ENCODE measurements at regions of chr9 and their contacts with region 1.

Region 1: GRCh38 chr9:133144137-133144903 is 19.4 kb downstream of the GBGT1 start:
- DNase-seq: peak; percentile 72
- ATAC-seq: peak; percentile 81
- H3K4me3 ChIP-seq: peak overlapping the region; percentile 60; the same call in 1 of the 2 replicates
- H3K27ac ChIP-seq: peak overlapping the region; percentile 13; the same call in 1 of the 2 replicates
- H3K4me1 ChIP-seq: peaks cover 48% of the 10 kb centered on the region
- H3K27me3 ChIP-seq: no peaks in the 10 kb centered on the region
- CTCF ChIP-seq: peak; percentile 95 to 99 (median 98); a peak in 5 of 6 replicates
- EP300 ChIP-seq: no peak; a peak in 1 of 4 replicates
- POLR2A ChIP-seq: no peak
- RAD21 ChIP-seq: peak; percentile 75

Region 2: DNA sequence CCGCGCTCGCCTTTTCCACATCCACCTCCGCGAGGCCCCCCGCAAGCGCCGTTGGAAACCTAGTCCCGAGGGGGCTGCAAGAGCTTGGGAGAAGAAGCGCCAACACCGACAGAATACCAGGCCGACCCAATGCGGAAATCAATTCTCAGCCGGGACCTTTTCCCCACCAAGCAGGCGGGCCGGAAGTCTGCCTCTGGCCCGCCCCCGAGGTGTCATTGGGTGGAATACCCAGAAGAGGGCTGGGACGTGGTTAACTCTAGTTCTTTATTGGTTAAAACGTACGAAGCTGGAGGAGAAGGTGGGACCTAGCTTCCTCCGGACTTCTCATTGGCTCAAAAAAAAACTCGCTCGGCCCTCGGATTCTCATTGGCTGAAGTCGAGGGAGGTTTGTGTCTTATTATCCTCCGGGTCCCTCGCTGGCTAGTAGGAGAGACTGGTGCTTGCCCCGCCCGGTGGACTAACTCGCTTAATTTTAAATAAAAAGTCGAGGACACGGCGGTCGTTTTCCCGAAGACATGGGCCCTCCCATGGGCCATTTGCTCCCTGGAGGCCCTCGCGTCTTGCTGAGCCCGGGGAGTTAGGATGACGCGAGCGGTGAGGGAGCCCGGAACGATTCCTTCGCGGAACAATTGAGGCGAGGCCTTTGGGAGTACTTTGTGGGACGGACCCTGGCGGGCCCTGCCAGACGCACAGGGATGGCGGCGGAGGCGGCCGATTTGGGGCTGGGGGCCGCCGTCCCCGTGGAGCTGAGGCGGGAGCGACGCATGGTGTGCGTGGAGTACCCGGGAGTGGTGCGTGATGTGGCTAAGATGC is 113.8 kb before region 1 on chr9 and contains the start of gene GTF3C5:
- CTCF ChIA-PET with region 1: interaction called, 27 read pairs
- POLR2A ChIA-PET with region 1: interaction called, 4 read pairs
- RAD21 ChIA-PET with region 1: interaction called, 18 read pairs
- SMC1A ChIA-PET with region 1: interaction called, 5 read pairs
- in situ Hi-C with region 1: no loop called
- intact Hi-C with region 1: no loop called
- DNase-seq: peak; percentile 97
- ATAC-seq: peak; percentile 99
- H3K4me3 ChIP-seq: peak within 1 kb of the TSS; percentile 77
- H3K27ac ChIP-seq: peak within 1 kb of the TSS; percentile 91
- H3K4me1 ChIP-seq: peaks cover 13% of the 10 kb centered on the region
- H3K27me3 ChIP-seq: no peaks in the 10 kb centered on the region
- CTCF ChIP-seq: no peak
- EP300 ChIP-seq: peak in 1 of 2 experiments; percentile 35; a peak in 1 of 4 replicates
- POLR2A ChIP-seq: peak; percentile 95
- RAD21 ChIP-seq: no peak
- polyA plus RNA-seq, gene GTF3C5: 2.2 to 6.9 TPM

Region 3: DNA sequence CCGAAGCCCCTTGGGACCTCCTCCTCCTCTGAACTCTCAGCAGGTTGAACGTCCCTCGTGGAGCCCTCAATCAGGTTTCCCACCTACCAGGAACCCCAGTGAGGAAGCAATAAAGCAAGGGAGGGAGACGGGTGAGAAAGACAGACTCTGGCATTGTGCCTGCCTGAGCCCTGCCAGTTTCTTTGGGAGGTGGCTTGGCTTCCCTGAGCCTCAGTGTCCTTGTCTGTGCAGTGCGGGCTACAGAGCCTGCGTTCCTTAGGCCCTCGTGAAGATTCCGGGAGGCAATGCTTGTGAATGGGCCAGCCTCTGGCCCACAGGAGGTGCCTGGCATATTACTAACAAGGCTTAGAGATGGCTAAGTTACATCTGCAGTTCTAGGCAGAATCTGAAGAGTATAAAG is 101.6 kb before region 1 on chr9:
- CTCF ChIA-PET with region 1: interaction called, 19 read pairs
- POLR2A ChIA-PET with region 1: no interaction called
- RAD21 ChIA-PET with region 1: interaction called, 6 read pairs
- SMC1A ChIA-PET with region 1: interaction called, 4 read pairs
- in situ Hi-C with region 1: no loop called
- intact Hi-C with region 1: loop called (anchors 1 kb)
- DNase-seq: no peak
- ATAC-seq: no peak
- H3K4me3 ChIP-seq: no peak overlapping the region
- H3K27ac ChIP-seq: no peak overlapping the region
- H3K4me1 ChIP-seq: no peaks in the 10 kb centered on the region
- H3K27me3 ChIP-seq: no peaks in the 10 kb centered on the region
- CTCF ChIP-seq: no peak
- EP300 ChIP-seq: no peak
- POLR2A ChIP-seq: no peak
- RAD21 ChIP-seq: no peak

Region 4: GRCh38 chr9:133103183-133103986 is 40.9 kb before region 1 on chr9:
- CTCF ChIA-PET with region 1: interaction called, 401 read pairs
- POLR2A ChIA-PET with region 1: interaction called, 10 read pairs
- RAD21 ChIA-PET with region 1: interaction called, 25 read pairs
- SMC1A ChIA-PET with region 1: interaction called, 16 read pairs
- in situ Hi-C with region 1: loop called (anchors 5 kb)
- intact Hi-C with region 1: loop called (anchors 1 kb)
- DNase-seq: no peak
- ATAC-seq: peak; percentile 88
- H3K4me3 ChIP-seq: no peak overlapping the region
- H3K27ac ChIP-seq: no peak overlapping the region
- H3K4me1 ChIP-seq: no peaks in the 10 kb centered on the region
- H3K27me3 ChIP-seq: no peaks in the 10 kb centered on the region
- CTCF ChIP-seq: peak; percentile 94 to 96 (median 95)
- EP300 ChIP-seq: no peak
- POLR2A ChIP-seq: no peak; the same call in 1 of the 2 replicates
- RAD21 ChIP-seq: peak; percentile 95

Region 5: GRCh38 chr9:133115448-133116345 is 28.6 kb before region 1 on chr9:
- CTCF ChIA-PET with region 1: interaction called, 401 read pairs
- POLR2A ChIA-PET with region 1: interaction called, 66 read pairs
- RAD21 ChIA-PET with region 1: interaction called, 219 read pairs
- SMC1A ChIA-PET with region 1: interaction called, 44 read pairs
- in situ Hi-C with region 1: no loop called
- intact Hi-C with region 1: loop called (anchors 2 kb)
- DNase-seq: peak; percentile 79
- ATAC-seq: peak; percentile 88
- H3K4me3 ChIP-seq: peak overlapping the region; percentile 63; the same call in 1 of the 2 replicates
- H3K27ac ChIP-seq: peak overlapping the region; percentile 88
- H3K4me1 ChIP-seq: peaks cover 67% of the 10 kb centered on the region
- H3K27me3 ChIP-seq: no peaks in the 10 kb centered on the region
- CTCF ChIP-seq: no peak
- EP300 ChIP-seq: peak in 1 of 2 experiments; percentile 2; a peak in 1 of 4 replicates
- POLR2A ChIP-seq: no peak
- RAD21 ChIP-seq: no peak

Region 6: GRCh38 chr9:133121198-133121939 is 23.0 kb before region 1 on chr9 and contains the start of gene RALGDS:
- CTCF ChIA-PET with region 1: interaction called, 401 read pairs
- POLR2A ChIA-PET with region 1: interaction called, 66 read pairs
- RAD21 ChIA-PET with region 1: interaction called, 219 read pairs
- SMC1A ChIA-PET with region 1: interaction called, 44 read pairs
- in situ Hi-C with region 1: no loop called
- intact Hi-C with region 1: loop called (anchors 1 kb)
- DNase-seq: no peak
- ATAC-seq: peak; percentile 68
- H3K4me3 ChIP-seq: peak within 1 kb of the TSS; percentile 91
- H3K27ac ChIP-seq: peak within 1 kb of the TSS; percentile 81
- H3K4me1 ChIP-seq: peaks cover 53% of the 10 kb centered on the region
- H3K27me3 ChIP-seq: no peaks in the 10 kb centered on the region
- CTCF ChIP-seq: no peak
- EP300 ChIP-seq: no peak
- POLR2A ChIP-seq: no peak
- RAD21 ChIP-seq: no peak
- polyA plus RNA-seq, gene RALGDS: 1.3 to 2.0 TPM

Region 7: GRCh38 chr9:133133681-133134418 is 10.5 kb before region 1 on chr9:
- CTCF ChIA-PET with region 1: interaction called, 32 read pairs
- POLR2A ChIA-PET with region 1: interaction called, 7 read pairs
- RAD21 ChIA-PET with region 1: interaction called, 30 read pairs
- SMC1A ChIA-PET with region 1: interaction called, 48 read pairs
- in situ Hi-C with region 1: no loop called
- intact Hi-C with region 1: no loop called
- DNase-seq: no peak
- ATAC-seq: peak; percentile 93
- H3K4me3 ChIP-seq: no peak overlapping the region
- H3K27ac ChIP-seq: peak overlapping the region; percentile 88
- H3K4me1 ChIP-seq: peaks cover 39% of the 10 kb centered on the region
- H3K27me3 ChIP-seq: no peaks in the 10 kb centered on the region
- CTCF ChIP-seq: peak in 1 of 3 experiments; percentile 5; a peak in 1 of 6 replicates
- EP300 ChIP-seq: peak; percentile 88 to 98
- POLR2A ChIP-seq: peak; percentile 70
- RAD21 ChIP-seq: no peak

Region 8: DNA sequence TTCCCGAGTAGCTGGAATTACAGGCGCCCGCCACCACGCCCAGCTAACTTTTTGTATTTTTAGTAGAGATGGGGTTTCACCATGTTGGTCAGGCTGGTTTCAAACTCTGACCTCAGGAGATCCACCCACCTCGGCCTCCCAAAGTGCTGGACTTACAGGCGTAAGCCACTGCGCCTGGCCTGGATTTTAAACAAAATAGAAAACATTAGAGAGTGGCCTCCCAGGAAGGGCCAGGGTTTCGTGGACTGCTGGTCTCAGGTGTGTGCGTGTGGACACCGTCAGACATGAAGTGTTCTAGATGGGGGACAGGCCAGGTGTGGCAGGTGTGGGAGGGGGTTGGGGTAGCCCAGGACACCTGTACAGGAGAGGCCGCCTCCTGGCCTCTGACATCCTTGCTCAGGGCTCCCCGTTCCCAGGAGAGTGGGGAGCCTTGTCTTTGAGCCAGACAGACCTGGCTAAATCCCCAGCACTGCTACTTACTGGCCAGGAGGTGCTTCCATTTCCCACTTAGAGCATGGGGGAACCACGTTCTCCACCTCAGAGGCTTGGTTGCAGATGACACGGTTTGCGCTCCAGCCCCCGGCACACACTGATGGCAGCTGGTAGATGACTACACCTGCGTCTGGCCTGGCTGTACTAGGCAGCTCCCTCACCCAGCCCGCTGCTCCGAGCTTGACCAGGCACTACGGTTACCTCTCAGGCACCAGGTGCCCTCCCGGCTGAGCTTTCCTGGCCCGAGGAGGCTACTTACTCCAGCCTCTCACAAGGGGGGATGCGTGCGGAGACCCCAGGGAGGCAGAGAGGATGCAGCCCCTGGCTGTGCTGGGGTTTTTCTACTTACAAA is 26.6 kb after region 1 on chr9:
- CTCF ChIA-PET with region 1: no interaction called
- POLR2A ChIA-PET with region 1: no interaction called
- RAD21 ChIA-PET with region 1: no interaction called
- SMC1A ChIA-PET with region 1: no interaction called
- in situ Hi-C with region 1: no loop called
- intact Hi-C with region 1: no loop called
- DNase-seq: no peak
- ATAC-seq: peak; percentile 41; the same call in 2 of the 3 replicates
- H3K4me3 ChIP-seq: no peak overlapping the region
- H3K27ac ChIP-seq: no peak overlapping the region
- H3K4me1 ChIP-seq: no peaks in the 10 kb centered on the region; the same call in 1 of the 2 replicates
- H3K27me3 ChIP-seq: peaks cover 4 to 13% of the 10 kb centered on the region in 2 experiments
- CTCF ChIP-seq: no peak
- EP300 ChIP-seq: no peak
- POLR2A ChIP-seq: no peak
- RAD21 ChIP-seq: no peak

Measured in GM12878 (cell line).